ENCODE measurements at regions of chr12 and their contacts with region 1.

Region 1: GRCh38 chr12:44930972-44931600 is 55.0 kb upstream of the NELL2 start:
- DNase-seq: peak in 1 of 2 experiments; percentile 52
- H3K4me3 ChIP-seq: no peak overlapping the region
- H3K4me3 Mint-ChIP-seq: no peak overlapping the region
- H3K27ac Mint-ChIP-seq: no peak overlapping the region
- H3K4me1 ChIP-seq: no peaks in the 10 kb centered on the region
- H3K4me1 Mint-ChIP-seq: no peaks in the 10 kb centered on the region
- H3K27me3 ChIP-seq: peaks cover 2% of the 10 kb centered on the region; the same call in 1 of the 2 replicates
- H3K27me3 Mint-ChIP-seq: no peaks in the 10 kb centered on the region
- CTCF ChIP-seq: peak; percentile 54 to 57

Region 2: DNA sequence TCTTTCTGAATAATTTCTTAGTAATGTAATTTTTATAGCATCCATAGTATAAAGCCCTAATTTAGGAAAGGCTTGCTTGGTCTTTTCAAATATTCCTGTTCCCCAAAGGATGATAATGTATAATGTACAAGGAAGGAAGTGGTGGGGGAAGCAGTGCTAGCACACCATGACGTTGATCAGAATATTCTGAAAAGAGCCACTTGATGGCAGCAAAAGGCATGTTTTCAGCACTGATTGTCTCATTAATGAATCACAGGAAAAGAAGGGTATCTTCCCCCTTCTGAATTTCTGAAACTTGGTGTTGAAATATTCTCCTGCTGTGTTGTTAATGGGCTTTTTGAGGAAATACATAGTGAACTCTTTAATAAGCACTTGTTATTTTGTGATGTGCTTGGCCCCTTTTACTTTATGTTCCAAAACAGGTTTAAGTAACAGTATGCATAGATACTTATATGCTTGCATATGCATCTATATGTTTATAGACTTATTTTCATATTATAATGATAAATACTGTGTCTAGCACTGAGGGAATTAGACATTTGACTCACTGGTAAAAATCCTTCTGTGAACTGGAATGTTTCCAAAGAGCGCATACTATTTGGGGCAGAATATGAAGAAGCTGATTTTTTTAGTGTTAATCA is 973.2 kb before region 1 on chr12:
- CTCF ChIA-PET with region 1: no interaction called
- POLR2A ChIA-PET with region 1: no interaction called
- intact Hi-C with region 1: loop called (anchors 1 kb)
- DNase-seq: peak in 1 of 2 experiments; percentile 66
- H3K4me3 ChIP-seq: no peak overlapping the region
- H3K4me3 Mint-ChIP-seq: no peak overlapping the region
- H3K27ac Mint-ChIP-seq: no peak overlapping the region
- H3K4me1 ChIP-seq: no peaks in the 10 kb centered on the region; the same call in 1 of the 2 replicates
- H3K4me1 Mint-ChIP-seq: peaks cover 6% of the 10 kb centered on the region
- H3K27me3 ChIP-seq: no peaks in the 10 kb centered on the region
- H3K27me3 Mint-ChIP-seq: no peaks in the 10 kb centered on the region
- CTCF ChIP-seq: peak; percentile 56 to 69

Region 3: DNA sequence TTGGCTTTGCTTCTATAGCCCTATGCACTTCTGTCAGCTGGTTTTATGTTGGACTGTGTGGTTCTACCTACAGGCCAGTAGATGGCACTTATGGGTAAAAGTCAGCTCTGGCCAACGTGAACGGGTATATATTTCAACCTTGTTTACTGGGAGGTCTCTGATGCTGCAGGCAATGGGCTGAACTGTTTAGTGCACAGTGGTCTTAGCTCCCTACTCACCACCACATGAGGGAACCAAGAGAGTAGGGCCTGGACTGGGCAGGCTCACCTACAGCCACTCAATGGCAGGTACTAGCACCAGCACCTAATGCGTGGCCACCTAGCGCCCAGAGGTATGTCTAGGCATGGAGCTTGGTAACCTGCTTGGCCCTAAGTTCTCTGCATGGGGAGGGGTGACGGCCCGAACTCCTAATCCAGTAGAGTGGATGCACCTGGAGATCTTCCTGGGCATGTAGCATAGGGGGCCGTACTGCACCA is 613.4 kb before region 1 on chr12:
- CTCF ChIA-PET with region 1: no interaction called
- POLR2A ChIA-PET with region 1: no interaction called
- intact Hi-C with region 1: loop called (anchors 5 kb)
- DNase-seq: peak in 1 of 2 experiments; percentile 25
- H3K4me3 ChIP-seq: no peak overlapping the region
- H3K4me3 Mint-ChIP-seq: no peak overlapping the region
- H3K27ac Mint-ChIP-seq: no peak overlapping the region
- H3K4me1 ChIP-seq: peaks cover 9% of the 10 kb centered on the region
- H3K4me1 Mint-ChIP-seq: peaks cover 24% of the 10 kb centered on the region
- H3K27me3 ChIP-seq: no peaks in the 10 kb centered on the region
- H3K27me3 Mint-ChIP-seq: no peaks in the 10 kb centered on the region
- CTCF ChIP-seq: peak; percentile 32 to 40

Region 4: GRCh38 chr12:44497042-44497441 is 434.0 kb before region 1 on chr12:
- CTCF ChIA-PET with region 1: interaction called, 4 read pairs
- POLR2A ChIA-PET with region 1: no interaction called
- intact Hi-C with region 1: loop called (anchors 1 kb)
- DNase-seq: peak in 1 of 2 experiments; percentile 30
- H3K4me3 ChIP-seq: no peak overlapping the region
- H3K4me3 Mint-ChIP-seq: no peak overlapping the region
- H3K27ac Mint-ChIP-seq: no peak overlapping the region
- H3K4me1 ChIP-seq: no peaks in the 10 kb centered on the region
- H3K4me1 Mint-ChIP-seq: no peaks in the 10 kb centered on the region
- H3K27me3 ChIP-seq: no peaks in the 10 kb centered on the region
- H3K27me3 Mint-ChIP-seq: peaks cover 2% of the 10 kb centered on the region
- CTCF ChIP-seq: peak; percentile 24 to 50

Region 5: GRCh38 chr12:44774815-44775411 is 156.2 kb before region 1 on chr12:
- CTCF ChIA-PET with region 1: interaction called, 7 read pairs
- POLR2A ChIA-PET with region 1: no interaction called
- intact Hi-C with region 1: loop called (anchors 1 kb)
- DNase-seq: peak; percentile 53 to 74
- H3K4me3 ChIP-seq: no peak overlapping the region
- H3K4me3 Mint-ChIP-seq: no peak overlapping the region
- H3K27ac Mint-ChIP-seq: no peak overlapping the region
- H3K4me1 ChIP-seq: no peaks in the 10 kb centered on the region
- H3K4me1 Mint-ChIP-seq: no peaks in the 10 kb centered on the region
- H3K27me3 ChIP-seq: no peaks in the 10 kb centered on the region; the same call in 1 of the 2 replicates
- H3K27me3 Mint-ChIP-seq: peaks cover 1% of the 10 kb centered on the region
- CTCF ChIP-seq: peak; percentile 89 to 93

Region 6: DNA sequence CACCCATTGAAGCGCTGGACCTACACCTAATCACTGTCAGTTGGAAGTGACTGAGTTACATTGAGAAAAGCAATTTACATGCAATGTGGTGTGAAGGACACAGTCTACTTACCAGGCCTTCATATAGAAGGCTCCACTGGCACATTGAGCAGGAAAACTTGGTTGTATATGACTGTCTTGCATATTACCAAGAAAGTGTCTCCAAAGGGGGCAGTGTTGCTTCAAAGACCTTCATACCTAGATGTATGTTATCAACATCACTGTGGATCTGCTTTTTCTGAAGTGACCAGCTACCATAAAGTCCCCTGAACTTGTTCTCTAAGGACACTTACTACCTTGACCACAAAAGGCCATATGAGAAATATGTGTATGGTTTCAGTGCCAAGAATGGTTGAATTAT is 119.0 kb before region 1 on chr12:
- CTCF ChIA-PET with region 1: no interaction called
- POLR2A ChIA-PET with region 1: no interaction called
- intact Hi-C with region 1: loop called (anchors 1 kb)
- DNase-seq: peak in 1 of 2 experiments; percentile 38
- H3K4me3 ChIP-seq: no peak overlapping the region
- H3K4me3 Mint-ChIP-seq: no peak overlapping the region
- H3K27ac Mint-ChIP-seq: no peak overlapping the region
- H3K4me1 ChIP-seq: no peaks in the 10 kb centered on the region
- H3K4me1 Mint-ChIP-seq: no peaks in the 10 kb centered on the region
- H3K27me3 ChIP-seq: no peaks in the 10 kb centered on the region
- H3K27me3 Mint-ChIP-seq: no peaks in the 10 kb centered on the region
- CTCF ChIP-seq: peak; percentile 26 to 42